ENCODE measurements at regions of chr18 and their contacts with region 1.

Region 1: GRCh38 chr18:63427558-63427957 is 5.3 kb upstream of the VPS4B start:
- DNase-seq: no peak
- ATAC-seq: no peak
- H3K4me3 ChIP-seq: no peak overlapping the region
- H3K27ac ChIP-seq: no peak overlapping the region
- H3K4me1 ChIP-seq: no peaks in the 10 kb centered on the region
- H3K27me3 ChIP-seq: 0 out of 4 replicates have a peak, but pooled peaks cover 0 to 2% of the 10 kb centered on the region in 2 experiments
- CTCF ChIP-seq: no peak
- EP300 ChIP-seq: no peak
- POLR2A ChIP-seq: no peak
- RAD21 ChIP-seq: no peak

Region 2: DNA sequence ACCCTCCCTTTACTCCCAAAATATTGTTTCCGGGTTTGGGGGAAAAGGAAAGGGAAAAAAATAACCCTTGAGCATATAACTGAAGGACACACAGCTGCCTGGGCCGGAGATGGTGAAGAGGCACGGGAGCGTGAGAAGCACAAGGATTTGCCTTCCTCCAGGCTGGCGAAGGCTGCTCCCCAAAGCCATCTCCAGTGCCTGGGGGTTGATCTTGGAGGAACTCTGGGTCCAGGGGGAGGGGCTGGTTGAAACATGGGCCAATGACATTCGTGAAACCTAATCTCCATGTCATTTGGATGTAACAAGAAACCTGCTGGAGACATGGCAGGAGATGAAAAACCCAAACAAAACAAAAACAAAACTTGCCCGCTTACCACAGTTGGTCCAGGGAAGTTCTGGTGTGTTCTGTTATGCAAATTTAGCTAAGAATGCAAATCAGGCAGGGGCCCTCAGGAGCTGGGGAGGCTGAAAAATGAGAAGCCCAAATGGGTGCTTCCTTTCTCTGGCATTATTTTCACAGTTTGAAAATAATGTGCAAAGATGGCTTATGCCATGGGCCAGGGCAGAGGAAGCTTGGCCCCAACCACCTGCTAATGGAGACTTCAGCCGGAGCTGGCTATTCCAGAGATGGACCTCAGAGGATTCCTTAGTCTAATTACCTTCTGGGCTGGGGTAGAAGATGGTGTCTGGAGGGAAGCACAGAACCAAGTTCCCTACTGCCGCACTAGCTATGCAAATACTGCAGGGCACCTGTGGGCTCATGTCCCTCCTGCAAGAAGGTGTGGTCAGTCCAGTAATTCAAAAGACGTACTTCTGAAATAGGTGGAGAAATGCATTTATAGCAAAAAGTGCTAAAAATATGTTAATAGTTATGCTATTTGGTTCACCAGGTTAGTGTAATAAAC is 288.9 kb before region 1 on chr18:
- CTCF ChIA-PET with region 1: no interaction called
- POLR2A ChIA-PET with region 1: no interaction called
- RAD21 ChIA-PET with region 1: no interaction called
- SMC1A ChIA-PET with region 1: no interaction called
- in situ Hi-C with region 1: loop called (anchors 5 kb)
- intact Hi-C with region 1: loop called (anchors 5 kb)
- DNase-seq: peak; percentile 94
- ATAC-seq: peak; percentile 58
- H3K4me3 ChIP-seq: peak overlapping the region; percentile 65
- H3K27ac ChIP-seq: peak overlapping the region; percentile 96
- H3K4me1 ChIP-seq: peaks cover 72% of the 10 kb centered on the region
- H3K27me3 ChIP-seq: no peaks in the 10 kb centered on the region
- CTCF ChIP-seq: no peak
- EP300 ChIP-seq: peak in 1 of 2 experiments; percentile 69; a peak in 1 of 4 replicates
- POLR2A ChIP-seq: peak; percentile 74
- RAD21 ChIP-seq: no peak